ENCODE measurements at regions of chr14 and their contacts with region 1.

Region 1: GRCh38 chr14:22929104-22929847 is at the start of gene PRMT5:
- DNase-seq: peak; percentile 97
- H3K4me3 Mint-ChIP-seq: no peak within 1 kb of the TSS
- H3K27ac Mint-ChIP-seq: no peak within 1 kb of the TSS
- H3K4me1 Mint-ChIP-seq: peaks cover 9% of the 10 kb centered on the region
- H3K27me3 Mint-ChIP-seq: no peaks in the 10 kb centered on the region
- CTCF ChIP-seq: no peak
- total RNA-seq, gene PRMT5: 101 and 113 TPM in 2 replicates

Region 2: DNA sequence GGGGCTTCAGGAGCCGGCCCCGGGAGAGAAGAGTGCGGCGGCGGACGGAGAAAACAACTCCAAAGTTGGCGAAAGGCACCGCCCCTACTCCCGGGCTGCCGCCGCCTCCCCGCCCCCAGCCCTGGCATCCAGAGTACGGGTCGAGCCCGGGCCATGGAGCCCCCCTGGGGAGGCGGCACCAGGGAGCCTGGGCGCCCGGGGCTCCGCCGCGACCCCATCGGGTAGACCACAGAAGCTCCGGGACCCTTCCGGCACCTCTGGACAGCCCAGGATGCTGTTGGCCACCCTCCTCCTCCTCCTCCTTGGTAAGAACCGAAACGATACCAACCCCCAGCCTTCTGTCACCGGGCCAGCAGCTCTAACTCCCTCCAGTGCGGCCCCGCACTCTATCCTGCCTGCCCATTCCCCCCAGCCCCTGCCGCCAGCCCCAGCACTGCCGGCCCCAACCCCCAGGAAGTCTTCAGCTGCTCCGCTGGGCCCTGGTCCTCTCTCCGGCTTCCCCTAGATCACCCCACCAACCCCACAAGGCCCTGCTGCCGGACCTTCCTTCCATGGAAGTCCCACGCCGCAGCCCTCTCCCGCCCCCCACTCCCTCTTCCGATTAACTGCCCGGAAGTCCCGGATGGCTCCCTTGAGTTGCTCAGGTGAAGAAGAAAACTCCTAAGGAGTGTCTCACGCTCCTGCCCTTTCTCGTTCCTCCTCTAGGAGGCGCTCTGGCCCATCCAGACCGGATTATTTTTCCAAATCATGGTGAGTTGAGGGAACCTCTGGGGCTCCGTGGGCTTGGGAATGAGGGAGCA is 57.0 kb before region 1 on chr14:
- CTCF ChIA-PET with region 1: no interaction called
- intact Hi-C with region 1: no loop called
- DNase-seq: peak; percentile 86
- H3K4me3 Mint-ChIP-seq: peak overlapping the region; percentile 80
- H3K27ac Mint-ChIP-seq: peak overlapping the region; percentile 73
- H3K4me1 Mint-ChIP-seq: peaks cover 8% of the 10 kb centered on the region
- H3K27me3 Mint-ChIP-seq: no peaks in the 10 kb centered on the region
- CTCF ChIP-seq: peak; percentile 62

Region 3: GRCh38 chr14:22955702-22956569 is 26.7 kb after region 1 on chr14:
- CTCF ChIA-PET with region 1: interaction called, 10 read pairs
- intact Hi-C with region 1: no loop called
- DNase-seq: no peak
- H3K4me3 Mint-ChIP-seq: peak overlapping the region; percentile 95
- H3K27ac Mint-ChIP-seq: peak overlapping the region; percentile 56
- H3K4me1 Mint-ChIP-seq: peaks cover 11% of the 10 kb centered on the region
- H3K27me3 Mint-ChIP-seq: no peaks in the 10 kb centered on the region
- CTCF ChIP-seq: no peak

Measured in Calu3 (cell line).